HAP-1 (cell line): ENCODE measurements at regions of chr16 and their contacts with region 1.

Region 1: GRCh38 chr16:72467157-72467759 is 295.3 kb upstream of the PMFBP1 start:
- DNase-seq: peak; percentile 21 to 76
- H3K4me3 ChIP-seq: no peak overlapping the region
- H3K4me1 ChIP-seq: peaks cover 20% of the 10 kb centered on the region
- H3K27me3 ChIP-seq: no peaks in the 10 kb centered on the region

Region 2: GRCh38 chr16:72124761-72125634 is 342.3 kb before region 1 on chr16:
- in situ Hi-C with region 1: loop called (anchors 25 kb)
- DNase-seq: peak; percentile 68 to 84
- H3K4me3 ChIP-seq: no peak overlapping the region
- H3K4me1 ChIP-seq: peaks cover 4% of the 10 kb centered on the region; the same call in 1 of the 2 replicates
- H3K27me3 ChIP-seq: no peaks in the 10 kb centered on the region

Region 3: GRCh38 chr16:72241930-72242329 is 225.3 kb before region 1 on chr16:
- in situ Hi-C with region 1: loop called (anchors 25 kb)
- DNase-seq: peak; percentile 61 to 75
- H3K4me3 ChIP-seq: no peak overlapping the region
- H3K4me1 ChIP-seq: peaks cover 11% of the 10 kb centered on the region
- H3K27me3 ChIP-seq: no peaks in the 10 kb centered on the region

Region 4: GRCh38 chr16:72349719-72350118 is 117.5 kb before region 1 on chr16:
- in situ Hi-C with region 1: no loop called
- DNase-seq: no peak
- H3K4me3 ChIP-seq: no peak overlapping the region
- H3K4me1 ChIP-seq: no peaks in the 10 kb centered on the region
- H3K27me3 ChIP-seq: no peaks in the 10 kb centered on the region

Region 5: DNA sequence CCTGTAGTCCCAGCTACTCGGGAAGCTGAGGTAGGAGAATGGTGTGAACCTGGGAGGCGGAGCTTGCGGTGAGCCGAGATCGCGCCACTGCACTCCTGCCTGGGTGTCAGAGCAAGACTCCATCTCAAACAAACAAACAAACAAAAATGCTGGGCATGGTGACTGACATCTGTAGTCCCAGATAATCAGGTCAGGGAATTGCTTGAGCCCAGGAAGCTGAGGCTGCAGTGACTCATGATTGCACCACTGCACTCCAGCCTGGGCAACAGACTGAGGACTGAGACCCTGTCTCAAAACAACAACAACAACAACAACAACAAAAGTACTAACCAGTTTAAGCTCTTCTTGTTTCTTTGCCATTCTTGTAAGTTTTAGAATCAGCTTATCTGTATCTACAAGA is 87.7 kb after region 1 on chr16:
- in situ Hi-C with region 1: no loop called
- DNase-seq: no peak
- H3K4me3 ChIP-seq: no peak overlapping the region
- H3K4me1 ChIP-seq: peaks cover 4% of the 10 kb centered on the region; the same call in 1 of the 2 replicates
- H3K27me3 ChIP-seq: no peaks in the 10 kb centered on the region